ENCODE measurements at regions of chr5 and their contacts with region 1.

Region 1: GRCh38 chr5:79924936-79925893 is 65.8 kb downstream of the MTX3 start:
- DNase-seq: peak in 1 of 2 experiments; percentile 13
- H3K4me3 ChIP-seq: no peak overlapping the region
- H3K27ac ChIP-seq: no peak overlapping the region
- H3K4me1 ChIP-seq: no peaks in the 10 kb centered on the region
- H3K27me3 ChIP-seq: no peaks in the 10 kb centered on the region; a peak in 1 of 7 replicates
- CTCF ChIP-seq: peak; percentile 64 to 80 (median 72)
- EP300 ChIP-seq: no peak
- POLR2A ChIP-seq: no peak
- RAD21 ChIP-seq: peak; percentile 78 to 85

Region 2: GRCh38 chr5:79938468-79938867 is 13.3 kb after region 1 on chr5:
- CTCF ChIA-PET with region 1: interaction called, 12 read pairs
- POLR2A ChIA-PET with region 1: no interaction called
- DNase-seq: no peak
- H3K4me3 ChIP-seq: no peak overlapping the region
- H3K27ac ChIP-seq: no peak overlapping the region
- H3K4me1 ChIP-seq: no peaks in the 10 kb centered on the region
- H3K27me3 ChIP-seq: no peaks in the 10 kb centered on the region
- CTCF ChIP-seq: no peak
- EP300 ChIP-seq: no peak
- POLR2A ChIP-seq: no peak
- RAD21 ChIP-seq: no peak

Measured in H1 (cell line).